ENCODE measurements at regions of chr16 and their contacts with region 1.

Region 1: GRCh38 chr16:77599793-77600415 is 122.4 kb upstream of the NUDT7 start:
- DNase-seq: peak; percentile 47
- ATAC-seq: peak; percentile 84
- H3K4me3 ChIP-seq: no peak overlapping the region
- H3K27ac ChIP-seq: no peak overlapping the region
- H3K4me1 ChIP-seq: no peaks in the 10 kb centered on the region
- H3K27me3 ChIP-seq: peaks cover 2% of the 10 kb centered on the region; the same call in 1 of the 2 replicates
- CTCF ChIP-seq: peak; percentile 76
- POLR2A ChIP-seq: no peak
- RAD21 ChIP-seq: peak; percentile 73

Region 2: GRCh38 chr16:76985392-76986045 is 614.4 kb before region 1 on chr16:
- CTCF ChIA-PET with region 1: no interaction called
- POLR2A ChIA-PET with region 1: no interaction called
- dilution Hi-C with region 1: no loop called
- in situ Hi-C with region 1: no loop called
- intact Hi-C with region 1: no loop called
- DNase-seq: no peak
- ATAC-seq: no peak
- H3K4me3 ChIP-seq: no peak overlapping the region
- H3K27ac ChIP-seq: no peak overlapping the region
- H3K4me1 ChIP-seq: no peaks in the 10 kb centered on the region
- H3K27me3 ChIP-seq: no peaks in the 10 kb centered on the region
- CTCF ChIP-seq: no peak
- POLR2A ChIP-seq: no peak
- RAD21 ChIP-seq: no peak

Region 3: GRCh38 chr16:77660311-77660710 is 60.4 kb after region 1 on chr16:
- CTCF ChIA-PET with region 1: interaction called, 3 read pairs
- POLR2A ChIA-PET with region 1: no interaction called
- dilution Hi-C with region 1: no loop called
- in situ Hi-C with region 1: no loop called
- intact Hi-C with region 1: loop called (anchors 1 kb)
- DNase-seq: peak; percentile 52
- ATAC-seq: peak; percentile 67
- H3K4me3 ChIP-seq: no peak overlapping the region
- H3K27ac ChIP-seq: no peak overlapping the region
- H3K4me1 ChIP-seq: no peaks in the 10 kb centered on the region
- H3K27me3 ChIP-seq: no peaks in the 10 kb centered on the region; the same call in 1 of the 2 replicates
- CTCF ChIP-seq: peak; percentile 52
- POLR2A ChIP-seq: no peak
- RAD21 ChIP-seq: peak; percentile 39

Region 4: DNA sequence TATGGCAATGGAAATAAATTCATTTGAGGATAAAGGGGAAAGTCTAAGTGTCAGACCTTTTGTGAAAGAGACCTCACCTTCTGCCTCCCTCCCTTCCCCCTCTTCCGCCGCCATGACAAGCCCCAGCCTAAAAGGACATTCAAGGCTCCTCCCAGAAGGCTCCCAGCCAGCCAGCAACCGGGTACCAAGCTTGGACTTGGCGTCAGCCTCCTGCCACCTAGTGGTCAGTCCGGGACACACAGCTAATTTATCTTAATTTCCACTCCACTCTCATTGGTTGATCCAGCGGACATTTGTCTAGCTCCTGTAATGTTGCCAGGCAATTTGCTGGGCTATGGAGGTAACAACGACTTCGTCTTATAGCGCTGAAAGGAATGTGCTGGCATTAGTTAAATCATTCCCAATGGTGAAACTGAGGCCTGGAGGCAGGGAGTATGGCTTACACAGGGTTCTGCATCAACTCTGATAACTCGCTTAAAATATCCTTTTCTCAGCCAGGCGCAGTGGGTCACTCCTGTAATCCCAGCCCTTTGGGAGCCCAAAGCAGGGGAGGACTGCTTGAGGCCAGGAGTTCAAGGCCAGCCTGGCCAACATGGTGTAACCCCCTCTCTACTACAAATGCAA is 403.1 kb after region 1 on chr16:
- CTCF ChIA-PET with region 1: interaction called, 6 read pairs
- POLR2A ChIA-PET with region 1: no interaction called
- dilution Hi-C with region 1: no loop called
- in situ Hi-C with region 1: no loop called
- intact Hi-C with region 1: loop called (anchors 1 kb)
- DNase-seq: peak; percentile 90
- ATAC-seq: peak; percentile 98
- H3K4me3 ChIP-seq: no peak overlapping the region
- H3K27ac ChIP-seq: no peak overlapping the region
- H3K4me1 ChIP-seq: no peaks in the 10 kb centered on the region
- H3K27me3 ChIP-seq: peaks cover 4% of the 10 kb centered on the region
- CTCF ChIP-seq: peak; percentile 99
- POLR2A ChIP-seq: no peak
- RAD21 ChIP-seq: peak; percentile 95

Region 5: GRCh38 chr16:78099372-78100161 is 499.7 kb after region 1 on chr16 and contains the start of gene WWOX:
- CTCF ChIA-PET with region 1: no interaction called
- POLR2A ChIA-PET with region 1: no interaction called
- dilution Hi-C with region 1: no loop called
- in situ Hi-C with region 1: no loop called
- intact Hi-C with region 1: loop called (anchors 5 kb)
- DNase-seq: peak; percentile 98
- ATAC-seq: peak; percentile 99
- H3K4me3 ChIP-seq: peak within 1 kb of the TSS; percentile 80
- H3K27ac ChIP-seq: peak within 1 kb of the TSS; percentile 52
- H3K4me1 ChIP-seq: no peaks in the 10 kb centered on the region
- H3K27me3 ChIP-seq: no peaks in the 10 kb centered on the region
- CTCF ChIP-seq: peak; percentile 70
- POLR2A ChIP-seq: no peak
- RAD21 ChIP-seq: no peak
- total RNA-seq, gene WWOX: 5.4 and 8.9 TPM in 2 replicates